ENCODE measurements at regions of chr5 and their contacts with region 1.

Region 1: DNA sequence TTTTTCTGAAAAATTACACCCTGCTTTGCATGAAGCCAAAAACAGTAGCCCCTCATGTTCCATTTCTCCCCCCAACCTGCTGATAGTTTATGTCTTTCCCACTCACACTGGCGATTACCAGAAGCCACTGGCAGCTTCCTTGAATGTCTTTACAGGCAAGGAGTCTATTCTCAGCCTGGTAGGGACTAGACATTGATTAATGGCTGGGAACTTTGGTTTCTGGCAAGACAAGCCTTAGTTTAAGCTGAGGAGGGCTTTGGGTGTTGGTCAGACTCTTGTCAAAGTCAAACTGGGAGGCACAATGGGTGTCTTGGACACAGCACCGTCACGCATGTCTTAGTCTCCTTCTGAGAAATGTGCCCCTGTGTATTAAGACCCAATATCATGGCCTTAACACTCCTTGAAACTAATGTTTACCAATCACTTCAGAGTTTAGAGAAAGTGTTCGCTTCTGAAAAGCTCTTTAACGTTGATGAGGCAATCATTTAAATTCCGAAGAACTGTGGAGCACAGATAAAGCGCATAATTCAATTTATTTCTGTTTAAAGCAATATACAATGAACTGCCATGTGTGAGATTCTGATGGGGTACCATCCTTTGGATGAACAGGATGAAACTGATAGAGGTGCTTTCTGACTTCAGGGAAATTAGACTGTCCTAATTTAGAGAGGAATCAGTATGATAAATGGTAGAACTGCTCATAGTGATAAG is 53.9 kb upstream of the CPEB4 start:
- DNase-seq: no peak
- H3K4me3 ChIP-seq: no peak overlapping the region
- H3K27ac ChIP-seq: no peak overlapping the region
- H3K4me1 ChIP-seq: peaks cover 35% of the 10 kb centered on the region
- H3K27me3 ChIP-seq: no peaks in the 10 kb centered on the region
- CTCF ChIP-seq: no peak

Region 2: DNA sequence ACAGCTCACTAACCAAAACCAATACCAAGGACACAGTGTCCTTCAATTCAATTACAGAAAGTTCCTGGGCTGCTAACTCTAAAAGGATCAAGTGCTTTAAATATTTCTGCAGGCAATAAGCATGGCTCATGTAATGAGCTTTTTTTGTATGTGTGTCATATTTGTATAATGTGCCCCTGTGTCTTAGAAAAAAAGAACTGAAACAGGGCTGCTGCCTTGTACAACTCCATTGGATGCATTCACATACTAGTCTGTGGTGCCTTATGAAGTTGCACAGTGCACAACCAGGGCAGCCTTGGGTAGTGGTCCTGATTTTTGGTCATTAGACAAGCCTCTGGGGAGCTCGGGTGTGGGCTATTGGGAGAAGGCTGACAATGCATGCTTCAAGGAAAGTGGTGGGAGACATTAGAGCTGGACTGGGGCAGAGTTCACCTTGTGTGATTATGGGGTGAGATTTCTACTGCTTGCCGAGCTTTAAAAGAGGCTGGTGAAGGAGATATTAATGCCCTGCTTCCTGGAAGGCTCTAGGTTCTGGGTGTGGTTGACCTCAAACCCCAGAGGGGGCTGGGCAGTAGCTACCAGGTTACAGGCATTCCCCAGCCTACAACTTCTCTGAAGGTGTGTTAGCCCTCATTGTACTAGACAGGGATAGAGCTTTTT is 50.3 kb after region 1 on chr5:
- CTCF ChIA-PET with region 1: no interaction called
- POLR2A ChIA-PET with region 1: no interaction called
- intact Hi-C with region 1: no loop called
- DNase-seq: peak; percentile 49 to 65
- H3K4me3 ChIP-seq: no peak overlapping the region
- H3K27ac ChIP-seq: 0 out of 2 replicates have a peak overlapping the region, but pooled peaks have one; percentile 6
- H3K4me1 ChIP-seq: peaks cover 60% of the 10 kb centered on the region
- H3K27me3 ChIP-seq: no peaks in the 10 kb centered on the region
- CTCF ChIP-seq: no peak

Region 3: DNA sequence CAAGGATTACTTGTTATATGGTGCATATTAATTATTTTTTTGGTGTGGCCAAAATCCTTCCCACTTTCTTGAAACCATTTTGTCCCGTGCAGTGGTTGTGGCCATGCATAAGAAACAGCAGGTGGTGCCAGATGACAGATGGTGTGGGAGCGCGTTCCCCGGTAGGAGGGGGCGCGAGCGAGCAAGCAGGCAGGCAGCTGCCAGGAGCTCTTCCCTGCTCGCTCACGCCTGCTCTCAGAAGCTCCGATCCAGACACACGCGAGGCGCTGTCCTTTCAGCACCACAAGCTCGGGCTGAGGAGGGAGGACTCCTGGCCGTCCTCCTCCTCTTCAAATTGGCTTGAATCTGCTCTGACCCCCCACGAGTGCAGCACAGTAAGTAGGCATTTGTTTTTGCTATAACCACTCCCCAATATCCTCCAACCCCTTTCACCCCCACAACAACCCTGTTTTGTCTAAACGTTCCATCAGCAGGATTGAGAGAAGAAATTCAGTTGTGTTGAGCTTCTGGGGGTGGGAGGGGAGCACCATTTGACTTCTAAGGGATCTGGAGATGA is 211.3 kb after region 1 on chr5 and contains the start of gene NSG2:
- CTCF ChIA-PET with region 1: interaction called, 11 read pairs
- POLR2A ChIA-PET with region 1: no interaction called
- intact Hi-C with region 1: no loop called
- DNase-seq: peak; percentile 60 to 73
- H3K4me3 ChIP-seq: no peak within 1 kb of the TSS
- H3K27ac ChIP-seq: no peak within 1 kb of the TSS
- H3K4me1 ChIP-seq: no peaks in the 10 kb centered on the region
- H3K27me3 ChIP-seq: peaks cover 17% of the 10 kb centered on the region
- CTCF ChIP-seq: peak; percentile 61
- total RNA-seq, gene NSG2: not detected in 2 replicates

Measured in PC-9 (cell line).